Activated T-helper 2 cell treated with anti-CD3 and anti-CD28 coated beads, Interferon-gamma antibody, Interleukin-2, Interleukin-4, amounts not matched to agents 10 μg/mL and 5 μg/mL and 100 μg/mL, durations not matched to agents 14 hours and 24 hours and 36 hours (primary cell): ENCODE measurements at regions of chr6 and their contacts with region 1.

Region 1: GRCh38 chr6:109009236-109009961 is 85.2 kb downstream of the SESN1 start:
- DNase-seq: peak; percentile 84
- H3K4me3 Mint-ChIP-seq: peak overlapping the region; percentile 89
- H3K27ac Mint-ChIP-seq: peak overlapping the region; percentile 84
- H3K4me1 Mint-ChIP-seq: peaks cover 54% of the 10 kb centered on the region
- H3K27me3 Mint-ChIP-seq: no peaks in the 10 kb centered on the region

Region 2: GRCh38 chr6:108565893-108566292 is 443.5 kb before region 1 on chr6:
- intact Hi-C with region 1: loop called (anchors 2 kb)
- DNase-seq: no peak
- H3K4me3 Mint-ChIP-seq: no peak overlapping the region
- H3K27ac Mint-ChIP-seq: no peak overlapping the region
- H3K4me1 Mint-ChIP-seq: peaks cover 43% of the 10 kb centered on the region
- H3K27me3 Mint-ChIP-seq: peaks cover 30% of the 10 kb centered on the region

Region 3: GRCh38 chr6:108755257-108756240 is 253.8 kb before region 1 on chr6:
- intact Hi-C with region 1: no loop called
- DNase-seq: no peak
- H3K4me3 Mint-ChIP-seq: no peak overlapping the region
- H3K27ac Mint-ChIP-seq: no peak overlapping the region
- H3K4me1 Mint-ChIP-seq: no peaks in the 10 kb centered on the region
- H3K27me3 Mint-ChIP-seq: peaks cover 23% of the 10 kb centered on the region

Region 4: DNA sequence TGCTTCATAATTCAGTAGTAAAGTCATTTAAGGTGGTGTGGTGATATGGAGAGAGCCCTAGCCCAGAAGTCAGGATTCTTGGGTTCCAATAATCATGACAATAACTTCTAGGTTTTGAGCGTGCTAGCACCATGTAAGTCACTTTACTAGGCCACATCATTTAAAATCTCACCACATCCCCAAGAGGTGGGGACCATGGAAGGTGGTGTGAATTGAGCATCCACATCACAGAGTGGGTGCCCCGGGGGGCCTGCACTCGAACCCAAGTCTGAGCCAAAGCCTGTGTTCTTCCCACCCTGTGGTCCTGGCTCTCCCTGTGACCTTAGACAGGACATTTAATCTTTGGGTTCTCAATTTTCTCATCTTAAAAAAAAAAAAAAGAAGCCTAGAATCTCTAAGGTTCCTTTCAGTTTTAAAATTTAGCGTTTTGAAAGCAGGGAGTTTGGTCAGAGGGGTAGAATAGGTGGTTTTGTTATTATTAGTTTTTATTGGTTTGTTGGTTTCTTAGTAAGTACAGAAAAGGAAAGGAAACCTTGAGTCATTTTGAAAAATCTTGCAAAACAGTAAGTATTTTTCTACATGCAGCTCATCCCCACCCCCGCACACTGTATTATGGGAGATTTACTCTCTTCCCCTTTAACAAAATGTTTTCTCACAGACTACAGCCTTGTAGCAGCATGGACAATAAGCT is 134.8 kb before region 1 on chr6:
- intact Hi-C with region 1: loop called (anchors 2 kb)
- DNase-seq: peak; percentile 58
- H3K4me3 Mint-ChIP-seq: peak overlapping the region; percentile 47
- H3K27ac Mint-ChIP-seq: peak overlapping the region; percentile 81
- H3K4me1 Mint-ChIP-seq: peaks cover 53% of the 10 kb centered on the region
- H3K27me3 Mint-ChIP-seq: peaks cover 15% of the 10 kb centered on the region

Region 5: DNA sequence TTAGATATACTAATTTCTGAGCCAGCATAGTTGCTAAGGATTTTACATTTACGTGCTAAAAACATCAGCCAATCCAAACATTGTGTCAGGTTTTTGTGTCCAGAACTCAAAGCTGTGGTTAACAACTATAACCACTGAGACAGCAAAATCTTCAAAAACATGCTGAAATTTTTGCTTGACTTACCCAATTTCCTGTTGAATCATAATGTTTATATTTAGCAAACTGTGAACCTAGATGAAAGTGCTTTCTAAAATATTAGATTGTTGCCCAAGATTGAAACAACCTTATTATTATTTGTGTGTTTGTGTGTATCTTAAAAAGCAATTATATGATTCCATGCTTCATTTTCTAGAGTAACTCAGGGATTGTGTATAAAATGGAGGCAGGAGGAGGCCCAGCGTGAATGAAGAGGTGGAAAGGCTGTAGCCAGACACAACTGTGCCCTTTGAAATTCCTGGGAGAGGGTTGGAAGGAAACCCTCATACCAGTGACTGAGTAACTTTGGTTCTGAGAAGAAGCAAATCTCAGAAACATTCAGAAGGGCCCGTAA is 113.2 kb before region 1 on chr6:
- intact Hi-C with region 1: loop called (anchors 5 kb)
- DNase-seq: no peak
- H3K4me3 Mint-ChIP-seq: peak overlapping the region; percentile 30
- H3K27ac Mint-ChIP-seq: peak overlapping the region; percentile 80
- H3K4me1 Mint-ChIP-seq: peaks cover 37% of the 10 kb centered on the region
- H3K27me3 Mint-ChIP-seq: peaks cover 7% of the 10 kb centered on the region

Region 6: DNA sequence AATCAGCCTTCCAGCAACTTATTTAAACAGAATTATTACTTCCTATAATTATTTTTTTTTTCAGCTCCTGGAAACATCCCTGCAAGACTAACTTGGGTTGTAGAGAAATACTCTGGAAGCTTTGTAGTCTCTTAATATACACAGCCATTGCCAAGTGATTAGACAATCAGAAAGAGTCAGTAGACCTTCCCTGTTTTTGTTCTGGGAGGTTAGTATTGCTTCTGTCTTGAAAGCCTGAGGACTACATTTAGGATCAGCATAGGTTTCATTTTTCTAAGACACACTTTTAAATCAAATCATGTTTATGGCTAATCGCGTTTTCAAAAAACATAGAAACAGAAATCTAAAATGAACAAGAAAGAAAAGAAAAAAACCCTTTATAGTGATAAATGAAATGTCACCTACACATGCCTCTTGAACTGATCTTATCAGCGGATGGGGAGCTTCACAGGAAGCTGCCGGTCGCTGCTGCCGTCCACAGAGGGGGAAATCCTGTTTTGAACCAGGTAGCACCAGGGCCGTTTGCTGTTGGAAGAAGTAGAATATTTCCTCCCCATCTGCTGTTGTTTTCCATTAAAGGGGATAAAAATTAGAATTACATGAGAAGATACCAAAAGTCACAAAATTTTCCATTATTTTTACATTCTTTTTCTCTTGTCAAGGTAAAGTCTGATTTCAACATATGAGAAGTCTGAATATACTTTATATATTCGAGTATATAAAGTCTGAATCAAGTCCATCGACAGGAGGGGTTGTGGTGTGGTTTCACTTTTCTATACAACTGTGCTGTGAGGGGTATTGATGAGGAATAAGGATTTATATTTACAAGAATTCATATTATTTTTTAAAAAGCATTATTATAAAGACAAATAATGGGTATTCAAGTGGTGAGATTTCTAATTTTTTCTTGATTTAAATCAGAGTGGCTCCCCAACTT is 66.6 kb before region 1 on chr6:
- intact Hi-C with region 1: loop called (anchors 2 kb)
- DNase-seq: peak; percentile 58
- H3K4me3 Mint-ChIP-seq: peak overlapping the region; percentile 64
- H3K27ac Mint-ChIP-seq: peak overlapping the region; percentile 84
- H3K4me1 Mint-ChIP-seq: peaks cover 59% of the 10 kb centered on the region
- H3K27me3 Mint-ChIP-seq: no peaks in the 10 kb centered on the region

Region 7: DNA sequence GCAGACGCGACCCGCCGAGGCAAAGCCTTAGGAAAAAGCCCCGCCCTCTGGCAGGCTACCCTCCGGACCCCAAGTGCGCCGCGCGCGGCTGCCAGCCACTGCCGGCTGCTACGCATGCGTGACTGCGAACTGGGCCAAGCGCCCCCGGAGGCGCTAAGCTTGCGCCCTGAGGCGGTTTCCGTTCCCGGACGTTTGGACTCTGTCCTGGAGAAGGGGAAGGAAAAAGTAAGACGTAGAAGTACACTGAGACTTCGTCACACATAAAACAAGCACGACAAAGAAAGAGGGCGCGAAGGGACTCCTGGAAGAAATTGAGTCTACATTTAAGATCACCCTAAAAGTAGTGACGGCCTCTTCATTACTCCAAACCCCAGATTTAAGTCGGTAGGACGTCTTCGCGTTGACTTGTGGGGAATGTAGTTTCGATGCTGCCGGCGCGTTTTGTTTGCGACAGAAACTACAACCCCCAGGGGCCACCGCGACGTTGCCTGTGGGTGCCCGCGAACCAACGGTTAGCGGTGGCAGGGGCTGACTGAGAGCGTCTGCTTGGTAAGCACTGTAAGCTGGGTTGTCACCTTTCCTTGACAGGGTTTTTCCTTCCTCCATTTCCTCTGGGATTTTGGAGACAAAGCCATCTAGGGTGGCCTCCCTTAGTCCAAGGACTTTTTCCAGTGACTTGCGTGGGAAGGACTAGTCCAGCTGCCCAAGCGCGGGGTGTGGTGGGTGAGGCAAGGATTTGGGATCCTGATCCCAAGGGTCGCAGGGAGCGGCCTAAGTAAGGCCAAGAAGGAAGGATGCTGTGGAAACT is 85.8 kb after region 1 on chr6 and contains the start of gene CEP57L1:
- intact Hi-C with region 1: loop called (anchors 2 kb)
- DNase-seq: peak; percentile 92
- H3K4me3 Mint-ChIP-seq: peak within 1 kb of the TSS; percentile 93
- H3K27ac Mint-ChIP-seq: peak within 1 kb of the TSS; percentile 99
- H3K4me1 Mint-ChIP-seq: peaks cover 45% of the 10 kb centered on the region
- H3K27me3 Mint-ChIP-seq: no peaks in the 10 kb centered on the region
- total RNA-seq, gene CEP57L1: 18.2 and 25.4 TPM in 2 replicates